ENCODE measurements at regions of chr17 and their contacts with region 1.

Region 1: DNA sequence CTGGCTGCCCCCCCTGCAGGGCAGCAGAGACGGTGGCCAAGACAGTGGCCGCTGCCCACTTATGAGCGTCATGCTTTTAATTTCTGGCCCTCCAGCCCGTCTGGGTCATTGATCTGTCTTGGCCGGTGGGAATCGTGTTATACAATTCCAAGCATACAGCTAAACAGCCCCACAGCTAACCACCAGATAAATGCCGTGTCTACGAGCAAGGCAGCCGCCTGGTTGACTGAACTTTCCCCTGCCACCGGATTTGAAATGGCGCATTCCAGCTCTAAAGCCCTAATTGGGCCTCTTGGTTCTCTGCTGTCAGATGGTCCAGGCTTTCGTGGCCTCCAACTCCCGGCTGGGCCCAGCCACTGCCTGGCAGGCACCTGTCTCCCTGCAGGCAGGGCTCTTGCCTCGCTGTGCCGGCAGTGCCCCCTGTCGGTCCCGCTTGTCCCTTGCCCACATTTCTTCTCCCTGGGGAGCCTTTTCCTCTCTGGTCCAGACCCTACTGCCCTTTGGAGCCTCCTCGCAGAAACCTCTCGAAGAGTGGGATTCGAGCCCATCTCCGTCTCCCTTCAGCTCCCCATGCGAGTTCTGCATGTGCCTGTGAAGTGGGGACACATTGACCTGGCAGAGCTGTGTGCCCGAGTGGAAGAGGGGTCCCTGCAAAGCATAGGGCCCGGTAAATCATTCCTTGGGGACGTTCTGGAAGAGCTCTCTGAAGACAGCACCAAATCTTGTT is 1.8 kb upstream of the RBFOX3 start:
- DNase-seq: no peak

Region 2: GRCh38 chr17:78674595-78675315 is 937.9 kb before region 1 on chr17:
- intact Hi-C with region 1: no loop called
- DNase-seq: no peak

Region 3: GRCh38 chr17:79355165-79355564 is 257.5 kb before region 1 on chr17:
- intact Hi-C with region 1: no loop called
- DNase-seq: no peak

Region 4: DNA sequence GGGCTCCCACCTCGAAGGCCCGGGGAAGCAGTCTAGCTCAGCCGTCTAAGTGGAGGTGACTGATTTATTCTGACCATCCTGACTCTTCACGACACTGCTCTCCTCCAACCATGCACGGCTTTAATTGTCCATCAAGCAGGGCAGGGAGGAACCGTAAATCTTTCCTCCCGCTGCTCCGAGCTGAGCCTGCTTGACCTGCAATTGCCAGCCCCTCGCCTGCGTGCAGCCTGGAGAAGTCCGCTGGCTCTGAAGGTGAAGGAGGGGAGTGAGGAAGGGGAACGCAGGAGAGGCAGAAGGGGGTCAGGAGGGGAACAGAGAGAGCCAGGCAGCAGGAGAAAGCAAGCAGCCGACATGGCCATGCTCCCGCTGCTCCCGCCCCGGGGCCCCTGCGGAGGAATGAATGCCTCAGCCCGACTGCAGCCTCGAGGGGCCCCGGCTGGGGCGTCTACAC is 11.9 kb before region 1 on chr17:
- intact Hi-C with region 1: no loop called
- DNase-seq: no peak

Region 5: GRCh38 chr17:79626156-79626890 is 13.7 kb after region 1 on chr17:
- intact Hi-C with region 1: no loop called
- DNase-seq: peak; percentile 63

Region 6: DNA sequence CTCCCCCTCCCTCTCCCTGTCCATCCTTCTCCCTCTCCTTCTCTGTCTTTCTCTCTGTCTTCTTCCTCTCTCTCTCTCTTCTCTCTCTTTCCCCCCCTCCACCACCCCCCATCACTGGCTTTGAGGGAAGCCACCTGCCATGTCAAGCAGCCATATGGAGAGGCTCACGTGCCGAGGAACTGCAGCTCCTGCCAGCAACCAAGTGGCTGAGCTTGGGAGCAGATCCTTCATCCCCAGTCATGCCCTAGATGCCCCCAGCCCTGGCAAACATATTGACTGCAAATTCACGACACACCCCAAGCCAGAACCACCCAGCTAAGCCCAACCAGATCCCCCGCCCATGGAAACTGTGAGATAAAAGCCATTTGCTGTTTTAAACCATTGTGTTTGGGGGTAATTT is 39.1 kb after region 1 on chr17:
- intact Hi-C with region 1: loop called in 1 of 2 experiments (anchors 5 kb)
- DNase-seq: no peak

Region 7: GRCh38 chr17:79702034-79702433 is 89.4 kb after region 1 on chr17:
- intact Hi-C with region 1: loop called in 1 of 2 experiments (anchors 5 kb)
- DNase-seq: no peak